Prostate gland (tissue), 2 donors: ENCODE measurements at regions of chr1 and their contacts with region 1.

Region 1: DNA sequence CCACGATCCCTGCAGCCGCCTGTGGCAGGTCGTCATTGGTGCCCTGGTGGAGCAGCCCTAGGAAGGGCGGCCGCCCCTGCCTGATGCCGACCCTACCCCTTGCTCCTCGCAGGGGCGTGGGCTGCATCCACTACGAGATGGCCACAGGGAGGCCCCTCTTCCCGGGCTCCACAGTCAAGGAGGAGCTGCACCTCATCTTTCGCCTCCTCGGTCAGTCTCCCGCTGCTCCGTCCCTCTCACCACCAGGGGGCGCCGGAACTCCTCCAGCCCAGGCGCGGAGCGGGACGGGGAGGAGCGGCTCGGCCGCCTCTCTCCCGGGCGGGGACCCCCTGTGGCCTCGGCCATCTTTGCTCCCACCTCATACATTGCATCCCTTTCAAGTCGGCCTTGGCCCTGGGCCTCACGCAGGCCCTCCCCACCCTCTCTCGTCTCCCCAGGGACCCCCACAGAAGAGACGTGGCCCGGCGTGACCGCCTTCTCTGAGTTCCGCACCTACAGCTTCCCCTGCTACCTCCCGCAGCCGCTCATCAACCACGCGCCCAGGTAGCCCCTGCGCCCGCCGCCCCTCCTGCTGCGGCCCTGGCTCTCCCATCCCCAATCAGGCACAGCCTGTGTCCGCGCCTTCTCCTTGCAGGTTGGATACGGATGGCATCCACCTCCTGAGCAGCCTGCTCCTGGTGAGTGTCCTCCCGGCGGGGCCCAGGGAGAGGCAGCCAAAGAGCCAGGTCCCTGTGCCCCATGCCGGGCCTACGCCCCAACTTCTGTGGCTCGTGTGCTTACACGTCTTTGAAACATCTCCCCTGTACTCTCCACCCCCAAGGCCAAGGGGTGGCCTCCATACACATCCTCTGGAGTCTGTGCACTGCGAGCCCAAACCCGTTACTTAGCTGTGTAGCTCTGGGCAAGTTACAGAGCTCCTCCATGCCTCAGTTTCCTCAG is 24.7 kb downstream of the CDK18 start:
- DNase-seq: peak; percentile 79
- H3K4me3 ChIP-seq: peak overlapping the region; percentile 10 to 14
- H3K27ac ChIP-seq: no peak overlapping the region
- H3K4me1 ChIP-seq: no peaks in the 10 kb centered on the region
- H3K27me3 ChIP-seq: no peaks in the 10 kb centered on the region
- CTCF ChIP-seq: peak; percentile 91 to 94 (median 94)
- POLR2A ChIP-seq: no peak

Region 2: GRCh38 chr1:205273551-205273982 is 255.6 kb before region 1 on chr1:
- intact Hi-C with region 1: loop called (anchors 10 kb)
- DNase-seq: peak; percentile 87
- H3K4me3 ChIP-seq: no peak overlapping the region
- H3K27ac ChIP-seq: no peak overlapping the region
- H3K4me1 ChIP-seq: no peaks in the 10 kb centered on the region
- H3K27me3 ChIP-seq: no peaks in the 10 kb centered on the region
- CTCF ChIP-seq: peak; percentile 98 to 99 (median 98)
- POLR2A ChIP-seq: no peak

Region 3: GRCh38 chr1:205354259-205354904 is 174.8 kb before region 1 on chr1:
- intact Hi-C with region 1: loop called (anchors 10 kb)
- DNase-seq: peak; percentile 60
- H3K4me3 ChIP-seq: no peak overlapping the region
- H3K27ac ChIP-seq: no peak overlapping the region
- H3K4me1 ChIP-seq: no peaks in the 10 kb centered on the region
- H3K27me3 ChIP-seq: no peaks in the 10 kb centered on the region
- CTCF ChIP-seq: peak; percentile 61 to 76 (median 70)
- POLR2A ChIP-seq: no peak

Region 4: DNA sequence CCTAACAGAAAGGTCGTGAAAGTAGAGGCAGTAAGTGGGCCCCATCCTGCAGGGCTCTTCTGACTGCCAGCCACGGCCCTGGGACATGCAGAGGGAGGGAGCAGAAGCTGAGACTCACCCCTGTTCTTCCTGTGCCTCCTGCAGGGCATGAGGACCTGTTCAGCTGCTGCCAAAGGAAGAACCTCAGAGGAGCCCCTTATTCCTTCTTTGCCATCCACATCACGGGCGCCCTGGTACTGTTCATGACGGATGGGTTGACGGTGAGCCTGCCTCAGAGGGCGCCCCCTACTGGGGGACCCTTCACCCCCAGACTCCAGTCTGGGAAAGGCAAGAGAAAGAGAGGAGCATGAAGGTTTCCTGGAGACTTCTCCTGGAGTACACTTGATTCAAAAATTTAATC is 55.6 kb after region 1 on chr1:
- intact Hi-C with region 1: loop called (anchors 5 kb)
- DNase-seq: no peak
- H3K4me3 ChIP-seq: no peak overlapping the region
- H3K27ac ChIP-seq: no peak overlapping the region
- H3K4me1 ChIP-seq: no peaks in the 10 kb centered on the region
- H3K27me3 ChIP-seq: no peaks in the 10 kb centered on the region
- CTCF ChIP-seq: no peak
- POLR2A ChIP-seq: no peak

Region 5: DNA sequence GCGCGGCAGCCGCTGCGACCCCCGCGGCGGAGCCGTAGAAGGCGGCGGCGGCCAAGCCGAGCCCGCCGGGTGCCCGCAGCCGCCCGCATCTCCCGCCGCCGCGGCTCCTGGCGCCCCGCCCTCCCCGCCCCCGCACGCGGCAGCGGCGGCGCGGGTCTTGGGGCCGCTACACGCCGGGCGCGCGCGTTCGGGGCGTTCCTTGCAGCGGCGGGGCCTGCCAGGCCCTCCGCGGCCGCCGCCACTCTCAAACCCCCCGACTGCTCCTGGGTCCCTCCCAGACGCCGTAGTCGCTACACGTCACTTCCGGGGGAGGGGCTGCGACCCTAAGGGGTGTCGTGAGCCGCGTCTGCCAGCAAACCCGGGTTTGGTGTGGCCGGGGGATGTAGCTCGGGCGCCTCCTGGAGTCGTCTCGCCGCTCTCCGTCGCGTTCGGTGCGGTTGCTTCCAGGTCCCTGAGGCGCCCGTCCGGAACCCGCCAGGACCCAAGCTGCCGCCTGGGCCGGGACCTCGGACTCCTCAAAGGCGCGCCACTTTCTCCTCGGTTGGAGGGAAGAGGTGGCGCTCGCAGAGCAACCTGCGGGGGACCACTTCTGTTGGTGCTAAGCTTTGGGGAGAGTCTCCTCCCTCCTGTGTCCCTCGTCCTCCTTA is 102.7 kb after region 1 on chr1 and contains the start of gene ELK4:
- intact Hi-C with region 1: loop called (anchors 5 kb)
- DNase-seq: peak; percentile 97
- H3K4me3 ChIP-seq: peak within 1 kb of the TSS; percentile 60
- H3K27ac ChIP-seq: peak within 1 kb of the TSS; percentile 89 to 94
- H3K4me1 ChIP-seq: peaks cover 2% of the 10 kb centered on the region
- H3K27me3 ChIP-seq: no peaks in the 10 kb centered on the region
- CTCF ChIP-seq: peak; percentile 56 to 94 (median 78)
- POLR2A ChIP-seq: peak; percentile 96
- total RNA-seq, gene ELK4: 58.8 to 62.7 TPM

Region 6: GRCh38 chr1:205658943-205659581 is 129.9 kb after region 1 on chr1:
- intact Hi-C with region 1: loop called (anchors 5 kb)
- DNase-seq: peak; percentile 75
- H3K4me3 ChIP-seq: no peak overlapping the region
- H3K27ac ChIP-seq: peak overlapping the region in 1 of 2 donors; percentile 89
- H3K4me1 ChIP-seq: peaks cover 12% of the 10 kb centered on the region
- H3K27me3 ChIP-seq: no peaks in the 10 kb centered on the region
- CTCF ChIP-seq: peak; percentile 63 to 92 (median 76)
- POLR2A ChIP-seq: no peak